CD4-positive, alpha-beta T cell (primary cell): ENCODE measurements at regions of chr4 and their contacts with region 1.

Region 1: GRCh38 chr4:7939377-7940108 is at the start of gene AFAP1:
- DNase-seq: peak; percentile 79 to 96 (median 90)
- ATAC-seq: peak; percentile 93
- H3K4me3 ChIP-seq: peak within 1 kb of the TSS; percentile 75
- H3K4me3 Mint-ChIP-seq: peak within 1 kb of the TSS; percentile 75
- H3K27ac ChIP-seq: peak within 1 kb of the TSS in 1 of 2 donors; percentile 46
- H3K27ac Mint-ChIP-seq: no peak within 1 kb of the TSS
- H3K4me1 ChIP-seq: peaks cover 19% of the 10 kb centered on the region
- H3K4me1 Mint-ChIP-seq: peaks cover 41% of the 10 kb centered on the region
- H3K27me3 ChIP-seq: no peaks in the 10 kb centered on the region
- H3K27me3 Mint-ChIP-seq: peaks cover 19% of the 10 kb centered on the region
- CTCF ChIP-seq: no peak
- total RNA-seq, gene AFAP1: 9.8 to 10.9 TPM

Region 2: DNA sequence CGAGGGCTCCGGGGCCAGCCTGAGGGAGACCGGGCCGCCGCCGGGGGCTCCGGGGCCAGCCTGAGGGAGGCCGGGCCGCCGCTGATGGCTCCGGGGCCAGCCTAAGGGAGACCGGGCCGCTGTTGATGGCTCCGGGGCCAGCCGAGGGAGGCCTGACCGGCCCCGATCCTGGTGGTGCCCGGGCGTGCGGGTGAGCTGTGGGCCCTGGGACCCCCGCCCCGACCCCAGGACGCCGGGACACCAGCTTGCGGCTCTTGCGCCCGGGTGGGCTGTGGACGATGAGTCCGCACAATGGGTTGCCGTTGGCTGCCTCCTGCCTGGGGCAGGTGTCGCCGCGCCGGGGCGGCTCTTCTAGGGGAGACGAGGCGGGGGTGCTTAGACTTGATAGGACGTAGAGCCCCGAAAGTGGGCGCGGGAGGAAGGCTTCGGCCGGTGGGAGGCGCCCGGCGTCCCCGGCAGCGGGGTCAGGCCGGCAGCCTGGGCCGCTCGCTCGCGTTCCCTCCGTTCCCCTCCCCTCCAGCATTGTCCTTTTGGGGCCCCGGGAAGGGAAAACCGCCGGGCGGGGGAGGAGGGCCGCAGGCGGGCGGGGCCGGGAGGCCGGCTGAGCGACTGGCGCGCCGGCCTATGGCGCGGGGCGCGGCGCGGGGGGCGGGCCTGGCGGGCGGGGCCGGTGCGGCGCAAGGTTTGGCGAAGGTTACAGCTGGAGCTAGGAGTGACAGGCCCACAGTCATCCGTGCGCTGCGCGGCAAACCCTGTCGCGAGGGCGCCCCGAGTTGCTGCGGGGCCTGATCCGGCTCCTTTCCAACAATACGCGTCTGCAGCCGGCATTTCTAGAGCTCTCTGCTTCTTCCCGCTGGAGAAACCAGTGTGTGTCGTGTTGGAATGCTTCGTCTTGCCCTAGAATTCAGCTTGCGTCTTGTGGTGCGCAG is 1156.2 kb before region 1 on chr4:
- CTCF ChIA-PET with region 1: no interaction called
- POLR2A ChIA-PET with region 1: no interaction called
- intact Hi-C with region 1: loop called in 1 of 2 experiments (anchors 5 kb)
- DNase-seq: peak; percentile 78 to 94 (median 86)
- ATAC-seq: peak; percentile 78
- H3K4me3 ChIP-seq: peak overlapping the region; percentile 77
- H3K4me3 Mint-ChIP-seq: peak overlapping the region; percentile 92
- H3K27ac ChIP-seq: peak overlapping the region; percentile 92 to 96
- H3K27ac Mint-ChIP-seq: peak overlapping the region; percentile 86
- H3K4me1 ChIP-seq: peaks cover 43% of the 10 kb centered on the region
- H3K4me1 Mint-ChIP-seq: peaks cover 59% of the 10 kb centered on the region
- H3K27me3 ChIP-seq: no peaks in the 10 kb centered on the region
- H3K27me3 Mint-ChIP-seq: no peaks in the 10 kb centered on the region
- CTCF ChIP-seq: no peak

Region 3: GRCh38 chr4:7857238-7857701 is 82.3 kb before region 1 on chr4:
- CTCF ChIA-PET with region 1: interaction called, 4 read pairs
- POLR2A ChIA-PET with region 1: interaction called, 9 read pairs
- intact Hi-C with region 1: loop called in 1 of 2 experiments (anchors 2 kb)
- DNase-seq: no peak
- ATAC-seq: no peak
- H3K4me3 ChIP-seq: no peak overlapping the region
- H3K4me3 Mint-ChIP-seq: no peak overlapping the region
- H3K27ac ChIP-seq: no peak overlapping the region
- H3K27ac Mint-ChIP-seq: peak overlapping the region; percentile 93
- H3K4me1 ChIP-seq: peaks cover 54% of the 10 kb centered on the region
- H3K4me1 Mint-ChIP-seq: peaks cover 61% of the 10 kb centered on the region
- H3K27me3 ChIP-seq: no peaks in the 10 kb centered on the region
- H3K27me3 Mint-ChIP-seq: no peaks in the 10 kb centered on the region
- CTCF ChIP-seq: no peak

Region 4: GRCh38 chr4:7876201-7876875 is 63.2 kb before region 1 on chr4:
- CTCF ChIA-PET with region 1: interaction called, 5 read pairs
- POLR2A ChIA-PET with region 1: interaction called, 13 read pairs
- intact Hi-C with region 1: loop called in 1 of 2 experiments (anchors 5 kb)
- DNase-seq: peak in 12 of 14 experiments; percentile 23 to 66 (median 44)
- ATAC-seq: peak; percentile 77
- H3K4me3 ChIP-seq: peak overlapping the region; percentile 28
- H3K4me3 Mint-ChIP-seq: peak overlapping the region; percentile 62
- H3K27ac ChIP-seq: peak overlapping the region; percentile 17 to 60
- H3K27ac Mint-ChIP-seq: peak overlapping the region; percentile 66
- H3K4me1 ChIP-seq: peaks cover 28% of the 10 kb centered on the region
- H3K4me1 Mint-ChIP-seq: peaks cover 64% of the 10 kb centered on the region
- H3K27me3 ChIP-seq: no peaks in the 10 kb centered on the region
- H3K27me3 Mint-ChIP-seq: no peaks in the 10 kb centered on the region
- CTCF ChIP-seq: peak; percentile 16

Region 5: DNA sequence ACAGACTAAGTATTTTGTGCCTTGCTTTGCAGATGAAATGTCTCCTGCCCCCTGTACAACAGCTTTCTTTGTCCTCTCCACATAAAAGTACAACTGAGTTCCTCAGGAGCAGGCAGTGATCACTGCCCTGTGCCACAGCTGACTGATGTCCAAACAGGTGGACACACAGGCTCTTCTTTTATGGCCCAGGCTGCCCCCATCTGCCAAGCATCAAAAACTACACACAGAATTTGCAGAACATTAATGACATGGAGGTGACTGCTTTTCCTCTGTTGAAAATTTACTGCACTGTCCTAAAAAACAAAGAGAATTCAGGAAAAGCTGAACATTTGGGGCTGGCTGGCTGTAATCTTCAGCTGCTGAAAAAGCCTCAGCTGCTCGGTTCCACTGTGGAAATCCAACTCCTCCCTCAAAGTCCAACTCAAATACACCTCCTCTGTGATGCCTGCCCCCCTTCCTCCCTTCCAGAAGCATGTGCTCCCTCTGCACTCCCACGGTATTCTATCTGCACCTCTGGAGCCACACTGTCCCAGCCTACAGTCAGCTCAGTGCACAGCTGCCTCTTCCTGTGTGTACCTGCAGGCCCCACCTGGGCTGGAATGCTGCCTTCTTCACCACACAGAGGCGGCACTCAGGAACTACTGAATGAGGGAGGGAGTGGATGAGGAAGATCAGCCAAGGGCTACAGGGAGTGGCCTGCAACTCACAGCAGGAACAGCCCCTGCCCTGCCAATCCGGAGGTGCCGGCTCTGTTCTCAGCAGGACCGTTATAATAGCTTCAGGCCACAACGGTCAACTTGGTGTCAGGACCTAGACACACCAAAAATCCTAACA is 10.2 kb before region 1 on chr4:
- CTCF ChIA-PET with region 1: interaction called, 3 read pairs
- POLR2A ChIA-PET with region 1: interaction called, 11 read pairs
- intact Hi-C with region 1: no loop called
- DNase-seq: no peak
- ATAC-seq: no peak
- H3K4me3 ChIP-seq: no peak overlapping the region
- H3K4me3 Mint-ChIP-seq: no peak overlapping the region
- H3K27ac ChIP-seq: no peak overlapping the region
- H3K27ac Mint-ChIP-seq: no peak overlapping the region
- H3K4me1 ChIP-seq: peaks cover 4% of the 10 kb centered on the region
- H3K4me1 Mint-ChIP-seq: peaks cover 22% of the 10 kb centered on the region
- H3K27me3 ChIP-seq: no peaks in the 10 kb centered on the region
- H3K27me3 Mint-ChIP-seq: no peaks in the 10 kb centered on the region
- CTCF ChIP-seq: no peak

Region 6: DNA sequence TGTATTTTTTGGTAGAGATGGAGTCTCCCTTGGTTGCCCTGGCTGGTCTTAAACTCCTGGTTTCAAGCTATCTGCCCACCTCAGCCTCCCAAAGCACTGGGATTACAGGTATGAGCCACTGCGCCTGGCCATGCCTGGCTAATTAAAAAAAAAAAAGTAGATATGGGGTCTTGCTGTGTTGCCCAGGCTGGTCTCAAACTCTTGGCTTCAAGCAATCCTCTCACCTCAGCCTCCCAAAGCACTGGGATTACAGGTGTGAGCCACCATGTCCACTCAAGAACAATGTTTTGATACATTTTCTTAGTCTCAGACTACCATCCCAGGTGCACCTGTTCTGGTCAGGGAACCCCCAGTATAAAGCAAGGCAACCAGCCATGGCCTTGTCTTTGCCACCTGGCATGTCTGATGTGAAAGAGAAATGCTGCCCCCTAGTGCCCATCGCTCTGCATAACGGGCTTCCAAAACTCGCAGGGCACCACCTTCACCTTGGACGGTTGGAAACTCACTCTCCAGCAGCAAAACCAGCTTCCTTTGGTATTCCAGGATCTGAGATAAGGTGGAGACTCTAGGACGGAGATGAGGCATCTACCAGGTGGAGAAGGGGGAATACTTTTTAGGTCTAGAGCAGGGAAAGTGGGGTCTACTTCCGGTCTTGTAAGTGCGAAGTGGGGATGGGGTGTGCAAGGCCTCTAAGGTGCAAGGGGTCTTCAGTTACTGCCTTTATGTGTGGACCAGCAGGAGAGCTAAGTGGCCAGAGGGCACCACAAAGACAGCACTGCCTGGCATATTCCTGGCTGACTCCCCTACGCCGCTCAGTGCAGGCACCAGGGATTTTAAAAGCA is 47.8 kb after region 1 on chr4:
- CTCF ChIA-PET with region 1: interaction called, 3 read pairs
- POLR2A ChIA-PET with region 1: no interaction called
- intact Hi-C with region 1: loop called in 1 of 2 experiments (anchors 10 kb)
- DNase-seq: peak; percentile 53 to 87 (median 72)
- ATAC-seq: peak; percentile 85
- H3K4me3 ChIP-seq: no peak overlapping the region
- H3K4me3 Mint-ChIP-seq: no peak overlapping the region
- H3K27ac ChIP-seq: no peak overlapping the region
- H3K27ac Mint-ChIP-seq: no peak overlapping the region
- H3K4me1 ChIP-seq: peaks cover 9% of the 10 kb centered on the region
- H3K4me1 Mint-ChIP-seq: peaks cover 7% of the 10 kb centered on the region
- H3K27me3 ChIP-seq: no peaks in the 10 kb centered on the region
- H3K27me3 Mint-ChIP-seq: no peaks in the 10 kb centered on the region
- CTCF ChIP-seq: peak; percentile 79

Region 7: DNA sequence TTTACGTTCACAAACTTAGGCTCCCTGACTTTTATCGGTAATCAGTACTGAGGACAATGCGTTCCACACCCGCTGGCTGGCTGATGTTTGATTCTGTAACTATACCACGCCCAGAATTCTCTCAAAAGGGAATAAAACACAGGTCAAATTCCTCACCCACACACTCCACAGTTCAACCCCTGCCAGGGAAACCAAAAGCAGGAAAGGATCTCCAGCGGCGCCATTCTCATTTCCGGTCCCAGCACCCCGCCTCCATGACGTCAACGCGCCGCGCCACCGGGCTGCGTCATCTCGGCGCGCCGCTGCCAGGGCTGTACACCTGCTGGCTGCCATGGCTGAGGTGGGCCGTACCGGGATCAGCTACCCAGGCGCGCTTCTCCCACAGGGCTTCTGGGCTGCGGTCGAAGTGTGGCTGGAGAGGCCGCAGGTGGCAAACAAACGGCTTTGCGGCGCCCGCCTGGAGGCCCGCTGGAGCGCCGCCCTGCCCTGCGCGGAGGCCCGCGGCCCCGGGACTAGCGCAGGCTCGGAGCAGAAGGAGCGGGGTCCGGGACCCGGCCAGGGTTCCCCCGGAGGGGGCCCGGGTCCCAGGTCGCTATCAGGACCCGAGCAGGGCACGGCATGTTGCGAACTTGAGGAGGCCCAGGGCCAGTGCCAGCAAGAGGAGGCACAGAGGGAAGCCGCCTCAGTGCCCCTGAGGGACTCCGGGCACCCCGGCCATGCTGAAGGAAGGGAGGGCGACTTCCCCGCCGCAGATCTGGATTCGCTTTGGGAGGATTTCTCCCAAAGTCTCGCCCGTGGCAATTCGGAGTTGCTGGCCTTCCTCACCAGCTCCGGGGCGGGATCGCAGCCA is 501.2 kb after region 1 on chr4 and contains the starts of genes ACOX3 and TRMT44:
- CTCF ChIA-PET with region 1: no interaction called
- POLR2A ChIA-PET with region 1: interaction called, 6 read pairs
- intact Hi-C with region 1: loop called in 1 of 2 experiments (anchors 10 kb)
- DNase-seq: peak; percentile 86 to 99 (median 94)
- ATAC-seq: peak; percentile 88
- H3K4me3 ChIP-seq: peak within 1 kb of the TSS; percentile 97
- H3K4me3 Mint-ChIP-seq: peak within 1 kb of the TSS; percentile 99
- H3K27ac ChIP-seq: peak within 1 kb of the TSS; percentile 88 to 96
- H3K27ac Mint-ChIP-seq: peak within 1 kb of the TSS; percentile 99
- H3K4me1 ChIP-seq: peaks cover 53% of the 10 kb centered on the region
- H3K4me1 Mint-ChIP-seq: peaks cover 88% of the 10 kb centered on the region
- H3K27me3 ChIP-seq: no peaks in the 10 kb centered on the region
- H3K27me3 Mint-ChIP-seq: no peaks in the 10 kb centered on the region
- CTCF ChIP-seq: no peak
- total RNA-seq, gene ACOX3: 4.9 to 6.1 TPM
- total RNA-seq, gene TRMT44: 25.6 to 29.2 TPM